Activated CD4-positive, alpha-beta T cell treated with anti-CD3 and anti-CD28 coated beads, Interleukin-2, amount 10 ng/mL, durations not matched to agents 7 days and 5 days (primary cell): ENCODE measurements at regions of chr1 and their contacts with region 1.

Region 1: GRCh38 chr1:108559215-108560186 is at the start of gene EEIG2:
- DNase-seq: peak; percentile 89
- H3K4me3 Mint-ChIP-seq: peak within 1 kb of the TSS; percentile 98
- H3K27ac Mint-ChIP-seq: peak within 1 kb of the TSS; percentile 88
- H3K4me1 Mint-ChIP-seq: peaks cover 32% of the 10 kb centered on the region
- H3K27me3 Mint-ChIP-seq: peaks cover 7% of the 10 kb centered on the region
- total RNA-seq, gene EEIG2: 14.5 to 16.3 TPM

Region 2: GRCh38 chr1:108512239-108512981 is 47.1 kb before region 1 on chr1:
- CTCF ChIA-PET with region 1: interaction called, 24 read pairs
- POLR2A ChIA-PET with region 1: no interaction called
- DNase-seq: peak; percentile 15
- H3K4me3 Mint-ChIP-seq: no peak overlapping the region
- H3K27ac Mint-ChIP-seq: no peak overlapping the region
- H3K4me1 Mint-ChIP-seq: no peaks in the 10 kb centered on the region
- H3K27me3 Mint-ChIP-seq: peaks cover 53% of the 10 kb centered on the region

Region 3: DNA sequence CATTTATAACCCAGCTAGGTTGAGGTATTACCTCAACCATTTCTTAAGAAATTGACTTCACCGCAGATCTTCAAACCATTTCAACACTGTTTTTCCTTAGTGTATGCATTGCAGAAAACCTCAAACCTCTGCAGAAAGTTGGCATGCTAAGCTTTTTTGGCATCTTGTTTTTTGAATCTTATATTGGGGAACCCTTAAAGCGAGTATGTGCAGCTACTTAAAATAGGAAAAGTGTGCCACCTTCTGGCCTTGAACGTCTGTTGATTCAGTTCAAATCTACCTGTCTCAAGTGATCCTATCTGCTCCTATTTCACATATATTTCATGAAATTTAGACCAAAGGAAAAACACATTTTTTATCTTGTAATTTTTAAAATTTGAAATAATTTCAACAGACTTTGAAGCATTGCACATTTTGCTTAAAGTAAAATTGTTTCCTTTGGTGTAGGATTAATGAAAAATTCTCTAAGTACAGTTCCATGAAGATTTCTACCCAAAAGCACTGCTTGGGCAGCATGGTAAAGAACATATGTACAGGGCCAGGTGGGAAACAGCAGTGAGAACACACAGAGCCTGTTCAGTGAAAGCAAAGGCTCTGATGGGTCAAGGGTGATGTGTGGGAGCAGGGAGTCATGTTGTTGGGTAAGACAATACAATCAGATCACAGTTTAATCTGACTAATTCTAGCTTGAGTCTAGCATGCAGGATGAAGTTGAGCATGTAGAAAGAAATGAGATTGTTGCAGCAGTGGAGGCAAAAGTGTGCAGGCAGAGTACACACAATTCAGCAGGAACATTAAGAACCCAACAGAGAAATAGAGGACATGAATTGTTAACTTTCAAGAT is 84.2 kb after region 1 on chr1:
- CTCF ChIA-PET with region 1: interaction called, 23 read pairs
- POLR2A ChIA-PET with region 1: interaction called, 3 read pairs
- DNase-seq: peak; percentile 74
- H3K4me3 Mint-ChIP-seq: no peak overlapping the region
- H3K27ac Mint-ChIP-seq: peak overlapping the region; percentile 97
- H3K4me1 Mint-ChIP-seq: peaks cover 74% of the 10 kb centered on the region
- H3K27me3 Mint-ChIP-seq: no peaks in the 10 kb centered on the region